Naive thymus-derived CD4-positive, alpha-beta T cell (primary cell): ENCODE measurements at regions of chr9 and their contacts with region 1.

Region 1: DNA sequence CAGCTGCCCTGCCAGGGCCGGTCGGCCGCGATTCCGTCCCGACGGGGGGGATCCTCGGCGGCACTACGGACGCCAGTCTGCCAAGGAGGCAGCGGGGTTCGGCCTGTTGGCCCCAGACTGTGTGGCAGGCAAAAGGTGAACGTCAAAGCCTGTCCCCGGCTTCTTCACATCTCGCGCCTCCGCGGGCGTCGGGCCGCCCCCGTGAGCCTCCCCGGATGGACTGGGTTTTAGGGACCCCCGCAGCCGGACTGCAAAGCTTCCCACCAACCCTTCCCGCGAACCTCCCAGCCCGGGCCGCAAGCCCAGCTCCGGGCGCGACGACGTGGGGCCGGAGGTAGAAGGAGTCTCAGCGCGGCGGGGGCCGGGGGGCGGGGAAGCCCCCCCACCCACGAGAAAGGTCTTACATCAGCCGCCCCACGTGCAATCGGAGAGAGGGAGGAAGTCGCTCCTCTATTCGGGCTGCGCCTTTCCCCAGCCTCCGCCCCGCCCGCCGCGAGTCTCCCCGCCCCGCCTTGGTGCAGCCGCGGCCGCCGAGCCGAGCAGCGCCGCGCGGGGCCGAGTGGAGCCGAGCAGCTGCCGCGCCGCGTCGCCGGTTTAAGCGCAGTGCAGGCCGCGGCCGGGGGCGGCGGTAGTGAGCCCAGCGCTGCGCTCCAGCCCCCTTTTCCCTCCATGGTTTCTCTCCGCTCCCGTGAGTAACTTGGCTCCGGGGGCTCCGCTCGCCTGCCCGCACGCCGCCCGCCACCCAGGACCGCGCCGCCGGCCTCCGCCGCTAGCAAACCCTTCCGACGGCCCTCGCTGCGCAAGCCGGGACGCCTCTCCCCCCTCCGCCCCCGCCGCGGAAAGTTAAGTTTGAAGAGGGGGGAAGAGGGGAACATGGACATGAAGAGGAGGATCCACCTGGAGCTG is at the start of gene ANP32B:
- DNase-seq: peak; percentile 94 to 97 (median 96)
- ATAC-seq: peak; percentile 90
- H3K4me3 ChIP-seq: peak within 1 kb of the TSS; percentile 85
- H3K4me3 Mint-ChIP-seq: peak within 1 kb of the TSS; percentile 79 to 92 (median 86)
- H3K27ac ChIP-seq: peak within 1 kb of the TSS; percentile 98
- H3K27ac Mint-ChIP-seq: peak within 1 kb of the TSS; percentile 25 to 94 (median 85)
- H3K4me1 ChIP-seq: peaks cover 30 to 51% of the 10 kb centered on the region in 2 donors
- H3K4me1 Mint-ChIP-seq: peaks cover 48 to 70% (median 63%) of the 10 kb centered on the region in 7 donors
- H3K27me3 ChIP-seq: no peaks in the 10 kb centered on the region
- H3K27me3 Mint-ChIP-seq: no peaks in the 10 kb centered on the region
- total RNA-seq, gene ANP32B: 143 to 267 (median 186) TPM

Region 2: GRCh38 chr9:97906236-97906831 is 76.6 kb before region 1 on chr9:
- CTCF ChIA-PET with region 1: interaction called, 4 read pairs
- POLR2A ChIA-PET with region 1: interaction called, 12 read pairs
- intact Hi-C with region 1: loop called in 1 of 2 experiments (anchors 1 kb)
- DNase-seq: peak in 7 of 9 donors; percentile 68 to 89 (median 79)
- ATAC-seq: peak; percentile 58
- H3K4me3 ChIP-seq: peak overlapping the region; percentile 51
- H3K4me3 Mint-ChIP-seq: peak overlapping the region; percentile 80 to 98 (median 92)
- H3K27ac ChIP-seq: peak overlapping the region; percentile 95
- H3K27ac Mint-ChIP-seq: peak overlapping the region; percentile 92 to 100 (median 98)
- H3K4me1 ChIP-seq: peaks cover 74 to 79% of the 10 kb centered on the region in 2 donors
- H3K4me1 Mint-ChIP-seq: peaks cover 61 to 94% (median 87%) of the 10 kb centered on the region in 7 donors
- H3K27me3 ChIP-seq: no peaks in the 10 kb centered on the region
- H3K27me3 Mint-ChIP-seq: no peaks in the 10 kb centered on the region

Region 3: DNA sequence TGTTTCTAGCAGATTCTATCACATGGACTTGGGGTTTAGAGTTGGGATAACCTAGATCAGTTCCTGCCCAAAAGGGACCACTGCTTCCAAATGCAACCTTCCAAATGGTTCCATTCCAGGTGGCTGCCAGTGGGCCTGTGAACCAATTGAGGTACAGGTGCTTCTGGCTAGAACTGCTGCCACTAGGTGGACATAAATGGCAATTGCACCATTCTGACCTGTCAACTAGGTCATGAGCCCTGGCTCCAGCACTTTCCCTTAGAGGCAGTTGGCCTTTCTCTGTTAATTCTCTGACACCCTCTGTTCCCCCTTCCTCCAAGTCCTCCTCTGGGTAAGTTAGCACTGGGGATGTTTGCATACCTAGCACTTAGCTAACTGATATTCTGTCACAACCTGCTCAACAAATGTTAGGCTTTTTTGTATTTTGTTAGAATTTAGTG is 28.4 kb before region 1 on chr9:
- CTCF ChIA-PET with region 1: interaction called, 10 read pairs
- POLR2A ChIA-PET with region 1: interaction called, 15 read pairs
- intact Hi-C with region 1: loop called (anchors 1 to 2 kb)
- DNase-seq: peak in 8 of 9 donors; percentile 34 to 69 (median 60)
- ATAC-seq: peak; percentile 90
- H3K4me3 ChIP-seq: no peak overlapping the region
- H3K4me3 Mint-ChIP-seq: no peak overlapping the region
- H3K27ac ChIP-seq: no peak overlapping the region
- H3K27ac Mint-ChIP-seq: peak overlapping the region in 4 of 9 donors; percentile 14 to 78 (median 44)
- H3K4me1 ChIP-seq: peaks cover 0 to 10% of the 10 kb centered on the region in 2 donors
- H3K4me1 Mint-ChIP-seq: peaks cover 0 to 13% (median 9%) of the 10 kb centered on the region in 7 donors
- H3K27me3 ChIP-seq: no peaks in the 10 kb centered on the region
- H3K27me3 Mint-ChIP-seq: peaks cover 0 to 18% (median 0%) of the 10 kb centered on the region in 5 donors

Region 4: DNA sequence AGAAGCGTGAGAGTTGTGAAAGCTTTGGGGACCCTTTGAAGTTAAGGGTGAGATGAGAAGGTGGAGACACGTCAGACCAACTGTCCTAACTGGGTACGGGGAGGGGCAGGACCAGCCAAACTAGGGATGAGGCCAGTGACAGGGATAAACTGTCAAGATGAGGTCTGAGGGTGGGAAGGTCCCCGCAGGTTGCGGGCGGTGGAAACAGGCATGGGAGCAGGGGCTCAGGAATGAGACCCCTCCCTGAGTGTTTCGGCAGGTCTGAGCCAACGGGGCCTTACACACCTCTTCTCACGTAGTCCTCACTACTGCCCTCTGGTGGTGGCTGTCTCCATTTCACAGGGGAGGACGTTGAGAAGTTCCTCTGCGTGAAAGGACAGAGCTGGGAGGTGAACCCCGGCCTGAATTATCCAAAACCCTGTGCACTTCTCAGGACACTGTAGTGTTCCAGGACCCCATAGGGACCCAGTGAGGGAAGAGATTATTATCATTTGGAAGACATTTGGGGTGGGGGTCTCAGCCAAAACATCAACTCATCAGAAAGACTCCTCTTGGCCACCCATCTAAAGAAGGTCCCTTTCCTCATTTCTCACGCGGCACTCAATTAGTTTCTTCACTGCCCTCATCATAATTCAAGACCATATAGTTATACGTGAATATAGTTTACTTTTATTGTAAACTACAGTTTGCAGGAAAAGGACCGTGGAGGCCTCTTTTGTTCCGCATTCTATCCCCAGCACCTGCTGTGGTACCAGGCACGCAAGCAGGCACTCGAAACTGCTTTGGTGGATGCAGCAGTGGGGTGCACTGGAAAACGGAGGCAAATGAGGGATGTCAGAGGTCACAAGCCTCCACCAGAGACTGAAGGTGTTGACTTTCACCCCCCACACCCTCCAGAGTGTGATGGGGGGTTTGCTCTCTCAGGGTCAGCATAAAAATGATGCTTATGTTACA is 51.9 kb after region 1 on chr9:
- CTCF ChIA-PET with region 1: interaction called, 6 read pairs
- POLR2A ChIA-PET with region 1: interaction called, 11 read pairs
- intact Hi-C with region 1: loop called (anchors 1 kb)
- DNase-seq: peak; percentile 76 to 92 (median 86)
- ATAC-seq: peak; percentile 99
- H3K4me3 ChIP-seq: no peak overlapping the region
- H3K4me3 Mint-ChIP-seq: peak overlapping the region in 8 of 10 donors; percentile 11 to 63 (median 41)
- H3K27ac ChIP-seq: no peak overlapping the region
- H3K27ac Mint-ChIP-seq: peak overlapping the region in 8 of 9 donors; percentile 9 to 87 (median 66)
- H3K4me1 ChIP-seq: peaks cover 0 to 4% of the 10 kb centered on the region in 2 donors
- H3K4me1 Mint-ChIP-seq: peaks cover 5 to 12% (median 8%) of the 10 kb centered on the region in 7 donors
- H3K27me3 ChIP-seq: no peaks in the 10 kb centered on the region
- H3K27me3 Mint-ChIP-seq: peaks cover 0 to 8% (median 0%) of the 10 kb centered on the region in 5 donors

Region 5: GRCh38 chr9:98101868-98102273 is 118.9 kb after region 1 on chr9:
- CTCF ChIA-PET with region 1: no interaction called
- POLR2A ChIA-PET with region 1: interaction called, 6 read pairs
- intact Hi-C with region 1: loop called (anchors 1 to 5 kb)
- DNase-seq: peak; percentile 35 to 96 (median 92)
- ATAC-seq: peak; percentile 99
- H3K4me3 ChIP-seq: peak overlapping the region; percentile 31
- H3K4me3 Mint-ChIP-seq: peak overlapping the region; percentile 66 to 86 (median 77)
- H3K27ac ChIP-seq: peak overlapping the region; percentile 78
- H3K27ac Mint-ChIP-seq: peak overlapping the region; percentile 87 to 99 (median 95)
- H3K4me1 ChIP-seq: peaks cover 88 to 91% of the 10 kb centered on the region in 2 donors
- H3K4me1 Mint-ChIP-seq: peaks cover 52 to 97% (median 88%) of the 10 kb centered on the region in 7 donors
- H3K27me3 ChIP-seq: no peaks in the 10 kb centered on the region
- H3K27me3 Mint-ChIP-seq: no peaks in the 10 kb centered on the region

Region 6: GRCh38 chr9:98255578-98256296 is 272.8 kb after region 1 on chr9 and contains the start of gene TBC1D2:
- CTCF ChIA-PET with region 1: interaction called, 3 read pairs
- POLR2A ChIA-PET with region 1: interaction called, 40 read pairs
- intact Hi-C with region 1: loop called (anchors 1 kb)
- DNase-seq: peak; percentile 96 to 98 (median 98)
- ATAC-seq: peak; percentile 96
- H3K4me3 ChIP-seq: peak within 1 kb of the TSS; percentile 80
- H3K4me3 Mint-ChIP-seq: peak within 1 kb of the TSS; percentile 96 to 99 (median 97)
- H3K27ac ChIP-seq: peak within 1 kb of the TSS; percentile 78
- H3K27ac Mint-ChIP-seq: peak within 1 kb of the TSS; percentile 90 to 99 (median 97)
- H3K4me1 ChIP-seq: peaks cover 11 to 23% of the 10 kb centered on the region in 2 donors
- H3K4me1 Mint-ChIP-seq: peaks cover 24 to 45% (median 32%) of the 10 kb centered on the region in 7 donors
- H3K27me3 ChIP-seq: no peaks in the 10 kb centered on the region
- H3K27me3 Mint-ChIP-seq: peaks cover 0 to 13% (median 0%) of the 10 kb centered on the region in 5 donors
- total RNA-seq, gene TBC1D2: 4.9 to 16.6 (median 8.8) TPM